ENCODE measurements at regions of chr13 and their contacts with region 1.

Region 1: GRCh38 chr13:109682534-109683244 is 103.7 kb downstream of the IRS2 start:
- DNase-seq: no peak
- H3K4me3 ChIP-seq: no peak overlapping the region
- H3K27me3 ChIP-seq: peaks cover 6% of the 10 kb centered on the region
- CTCF ChIP-seq: no peak

Region 2: DNA sequence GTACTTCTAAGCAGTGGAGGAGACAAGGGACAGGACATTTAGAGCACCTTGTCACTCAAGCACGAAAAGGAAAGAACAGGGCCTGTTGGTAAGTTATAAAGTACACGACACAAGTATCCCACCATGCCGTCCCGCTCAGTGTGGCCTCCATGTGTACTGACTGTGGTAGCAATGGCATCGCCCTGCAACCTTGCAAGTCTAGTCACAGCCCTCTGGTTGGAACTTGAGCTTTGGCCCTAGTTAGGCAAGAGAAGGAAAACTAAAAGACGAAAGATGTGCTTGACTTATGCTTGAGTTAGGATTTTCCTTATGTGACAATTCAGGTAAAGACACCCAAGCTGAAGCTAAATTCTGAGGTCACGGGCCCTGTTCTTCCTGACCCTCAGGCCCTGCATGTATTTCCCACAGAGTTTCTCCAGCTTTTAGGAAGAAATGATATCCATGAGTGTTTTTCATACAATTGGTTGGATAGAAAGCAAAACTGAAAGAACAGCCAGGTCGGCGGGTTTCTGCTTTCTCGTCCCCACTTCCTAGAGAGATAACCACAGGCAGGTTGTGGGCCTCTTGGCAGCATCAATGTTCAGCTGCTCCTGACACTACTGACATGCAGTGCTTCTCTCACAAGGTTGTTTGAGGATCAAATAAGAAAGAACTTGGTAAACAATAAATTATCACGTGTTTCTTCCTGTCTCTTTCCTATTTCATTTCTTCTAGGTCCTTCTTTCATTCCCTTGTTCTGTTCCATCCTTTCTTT is 112.6 kb before region 1 on chr13:
- CTCF ChIA-PET with region 1: no interaction called
- POLR2A ChIA-PET with region 1: interaction called, 14 read pairs
- DNase-seq: no peak
- H3K4me3 ChIP-seq: no peak overlapping the region
- H3K27me3 ChIP-seq: no peaks in the 10 kb centered on the region
- CTCF ChIP-seq: no peak

Region 3: GRCh38 chr13:109654341-109655205 is 28.1 kb before region 1 on chr13:
- CTCF ChIA-PET with region 1: no interaction called
- POLR2A ChIA-PET with region 1: no interaction called
- DNase-seq: no peak
- H3K4me3 ChIP-seq: no peak overlapping the region
- H3K27me3 ChIP-seq: 0 out of 2 replicates have a peak, but pooled peaks cover 1% of the 10 kb centered on the region
- CTCF ChIP-seq: no peak

Measured in BJ (cell line).